Activated CD4-positive, alpha-beta T cell treated with anti-CD3 and anti-CD28 coated beads, Interleukin-2, amount 10 ng/mL, durations not matched to agents 24 days and 14 days (primary cell): ENCODE measurements at regions of chr1 and their contacts with region 1.

Region 1: DNA sequence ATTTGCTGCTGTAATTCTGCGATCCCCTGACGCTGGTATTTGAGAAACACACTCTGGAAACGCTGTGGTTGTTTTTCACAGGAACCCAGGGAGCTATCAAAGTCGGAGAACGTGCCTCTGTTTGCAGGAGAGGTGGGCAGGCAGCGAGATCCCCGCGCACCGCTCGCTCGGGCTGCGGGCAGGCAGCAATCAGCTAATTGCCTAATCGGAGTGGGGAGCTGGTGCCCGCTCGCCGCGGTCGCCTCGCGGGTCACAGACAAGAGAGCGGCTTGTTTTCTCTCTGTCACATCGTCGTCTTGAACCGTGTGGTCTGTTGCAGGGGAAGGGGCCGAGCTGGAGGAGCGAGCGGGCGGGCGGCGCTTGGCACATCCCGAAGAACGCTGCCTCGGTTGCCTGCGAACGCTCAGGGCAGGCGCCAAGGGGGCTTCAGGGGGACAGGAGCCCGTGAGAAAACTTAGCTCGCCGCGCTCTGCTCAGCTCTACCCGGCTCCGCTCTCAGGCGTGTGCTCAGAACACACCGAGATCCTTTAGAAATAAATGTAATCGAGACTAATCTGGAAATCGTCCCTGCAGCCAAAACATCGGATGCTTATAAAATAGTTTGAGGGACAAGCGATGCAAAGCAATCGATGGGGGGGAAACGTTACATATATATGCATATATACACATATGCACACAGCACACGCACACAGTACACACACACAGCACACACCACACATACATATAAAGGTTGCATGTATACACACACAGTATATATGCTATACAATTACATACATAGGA is 93.6 kb upstream of the SMYD2 start:
- DNase-seq: no peak
- H3K4me3 Mint-ChIP-seq: no peak overlapping the region
- H3K27ac Mint-ChIP-seq: no peak overlapping the region
- H3K4me1 Mint-ChIP-seq: no peaks in the 10 kb centered on the region
- H3K27me3 Mint-ChIP-seq: peaks cover 57% of the 10 kb centered on the region

Region 2: DNA sequence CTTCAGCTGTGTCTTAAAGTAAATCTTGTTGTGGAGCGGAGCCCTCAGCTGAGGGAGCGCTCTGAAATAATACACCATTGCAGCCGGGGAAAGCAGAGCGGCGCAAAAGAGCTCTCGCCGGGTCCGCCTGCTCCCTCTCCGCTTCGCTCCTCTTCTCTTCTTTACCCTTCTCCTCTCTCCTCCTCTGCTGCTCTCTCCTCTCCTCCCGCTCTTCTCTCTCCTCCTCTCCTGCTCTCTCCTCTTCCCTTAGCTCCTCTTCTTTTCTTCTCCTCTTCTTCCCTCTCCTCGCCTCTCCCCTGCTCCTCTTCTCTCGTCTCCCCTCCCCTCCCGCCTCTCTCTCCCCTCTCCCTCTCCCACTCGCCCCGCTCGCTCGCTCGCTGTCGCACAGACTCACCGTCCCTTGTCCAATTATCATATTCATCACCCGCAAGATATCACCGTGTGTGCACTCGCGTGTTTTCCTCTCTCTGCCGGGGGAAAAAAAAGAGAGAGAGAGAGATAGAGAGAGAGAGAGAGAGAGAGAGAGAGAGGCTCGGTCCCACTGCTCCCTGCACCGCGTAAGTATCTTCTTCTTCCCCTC is 199.3 kb before region 1 on chr1 and contains the start of gene PROX1:
- intact Hi-C with region 1: loop called (anchors 5 kb)
- DNase-seq: peak; percentile 85
- H3K4me3 Mint-ChIP-seq: peak within 1 kb of the TSS; percentile 92
- H3K27ac Mint-ChIP-seq: peak within 1 kb of the TSS; percentile 78
- H3K4me1 Mint-ChIP-seq: peaks cover 29% of the 10 kb centered on the region
- H3K27me3 Mint-ChIP-seq: peaks cover 92% of the 10 kb centered on the region
- total RNA-seq, gene PROX1: not detected in 2 replicates